CD8-positive, alpha-beta T cell (primary cell): ENCODE measurements at regions of chr11 and their contacts with region 1.

Region 1: DNA sequence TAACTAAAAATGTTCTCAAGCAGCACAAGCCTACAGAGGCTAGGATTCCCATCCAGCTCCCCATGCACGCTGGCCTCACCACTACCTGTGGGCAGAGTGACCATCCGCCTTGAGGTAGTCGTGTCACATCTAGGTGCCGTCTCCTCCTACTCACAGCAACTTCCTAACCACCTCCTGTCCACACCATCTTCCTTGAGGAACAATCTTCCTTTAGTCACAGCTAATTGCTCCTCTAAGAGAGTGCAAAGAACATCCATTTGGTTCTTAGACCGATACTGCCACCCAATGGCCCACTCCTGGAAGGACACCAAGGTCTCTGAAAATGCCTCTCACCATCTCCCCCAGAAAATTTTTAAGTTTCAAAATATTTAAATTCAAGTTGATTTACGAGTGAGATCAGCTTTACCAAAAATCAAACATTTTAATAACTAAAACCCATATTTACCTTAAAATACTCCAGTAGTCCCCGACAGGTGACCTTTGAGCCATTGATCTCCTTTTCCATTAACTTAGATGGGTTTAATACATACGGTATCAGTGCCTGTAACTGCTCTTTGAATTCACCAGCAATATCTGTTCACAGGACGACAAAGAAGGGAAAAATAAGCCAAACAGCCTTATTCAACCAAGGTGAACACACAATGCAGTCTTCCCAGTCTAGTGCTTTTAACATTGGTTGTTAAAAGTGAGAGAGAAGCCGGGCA is 21.7 kb upstream of the PLAAT3 start:
- DNase-seq: peak; percentile 60 to 82 (median 75)
- ATAC-seq: peak; percentile 89
- H3K4me3 ChIP-seq: no peak overlapping the region
- H3K4me3 Mint-ChIP-seq: no peak overlapping the region
- H3K27ac ChIP-seq: no peak overlapping the region
- H3K27ac Mint-ChIP-seq: no peak overlapping the region
- H3K4me1 ChIP-seq: no peaks in the 10 kb centered on the region
- H3K4me1 Mint-ChIP-seq: peaks cover 8% of the 10 kb centered on the region
- H3K27me3 ChIP-seq: no peaks in the 10 kb centered on the region
- H3K27me3 Mint-ChIP-seq: no peaks in the 10 kb centered on the region
- CTCF ChIP-seq: peak; percentile 93

Region 2: DNA sequence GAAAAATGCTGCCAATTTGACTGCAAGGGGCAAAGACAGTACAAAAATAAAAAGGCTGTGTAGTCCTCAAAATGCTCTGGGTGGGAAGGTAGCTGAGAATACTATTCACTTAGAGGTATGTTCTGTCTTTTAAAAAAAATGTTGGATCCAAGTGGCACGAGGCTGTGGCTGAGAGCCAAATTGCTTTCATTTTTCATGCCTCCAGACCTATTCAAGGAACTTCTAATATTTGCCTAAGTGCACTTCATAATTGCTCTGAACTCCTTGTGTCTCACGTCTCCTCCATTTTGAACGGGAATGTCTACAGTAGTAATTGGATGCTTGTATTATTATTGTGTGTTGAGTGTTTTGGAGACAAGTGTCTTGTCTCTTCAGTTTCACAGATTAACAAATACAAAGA is 373.4 kb before region 1 on chr11:
- CTCF ChIA-PET with region 1: no interaction called
- POLR2A ChIA-PET with region 1: no interaction called
- intact Hi-C with region 1: no loop called
- DNase-seq: no peak
- ATAC-seq: no peak
- H3K4me3 ChIP-seq: no peak overlapping the region
- H3K4me3 Mint-ChIP-seq: no peak overlapping the region
- H3K27ac ChIP-seq: no peak overlapping the region
- H3K27ac Mint-ChIP-seq: no peak overlapping the region
- H3K4me1 ChIP-seq: no peaks in the 10 kb centered on the region
- H3K4me1 Mint-ChIP-seq: no peaks in the 10 kb centered on the region
- H3K27me3 ChIP-seq: no peaks in the 10 kb centered on the region
- H3K27me3 Mint-ChIP-seq: peaks cover 29% of the 10 kb centered on the region
- CTCF ChIP-seq: no peak

Region 3: GRCh38 chr11:63490551-63491239 is 145.2 kb before region 1 on chr11 and contains the start of gene PLAAT5:
- CTCF ChIA-PET with region 1: interaction called, 22 read pairs
- POLR2A ChIA-PET with region 1: no interaction called
- intact Hi-C with region 1: no loop called
- DNase-seq: peak in 6 of 9 experiments; percentile 13 to 63 (median 32)
- ATAC-seq: peak; percentile 55
- H3K4me3 ChIP-seq: peak within 1 kb of the TSS; percentile 37 to 44
- H3K4me3 Mint-ChIP-seq: peak within 1 kb of the TSS; percentile 82
- H3K27ac ChIP-seq: no peak within 1 kb of the TSS
- H3K27ac Mint-ChIP-seq: peak within 1 kb of the TSS; percentile 67
- H3K4me1 ChIP-seq: peaks cover 6% of the 10 kb centered on the region
- H3K4me1 Mint-ChIP-seq: peaks cover 17% of the 10 kb centered on the region
- H3K27me3 ChIP-seq: peaks cover 0 to 4% of the 10 kb centered on the region in 2 experiments
- H3K27me3 Mint-ChIP-seq: peaks cover 17% of the 10 kb centered on the region
- CTCF ChIP-seq: no peak
- total RNA-seq, gene PLAAT5: not detected

Region 4: GRCh38 chr11:63553741-63554151 is 82.2 kb before region 1 on chr11:
- CTCF ChIA-PET with region 1: interaction called, 8 read pairs
- POLR2A ChIA-PET with region 1: interaction called, 4 read pairs
- intact Hi-C with region 1: loop called in 1 of 2 experiments (anchors 5 kb)
- DNase-seq: peak in 8 of 9 experiments; percentile 48 to 89 (median 76)
- ATAC-seq: peak; percentile 80
- H3K4me3 ChIP-seq: peak overlapping the region; percentile 15 to 17
- H3K4me3 Mint-ChIP-seq: peak overlapping the region; percentile 81
- H3K27ac ChIP-seq: peak overlapping the region; percentile 55 to 88
- H3K27ac Mint-ChIP-seq: peak overlapping the region; percentile 99
- H3K4me1 ChIP-seq: peaks cover 49% of the 10 kb centered on the region
- H3K4me1 Mint-ChIP-seq: peaks cover 74% of the 10 kb centered on the region
- H3K27me3 ChIP-seq: no peaks in the 10 kb centered on the region
- H3K27me3 Mint-ChIP-seq: no peaks in the 10 kb centered on the region
- CTCF ChIP-seq: no peak

Region 5: GRCh38 chr11:63652671-63653070 is 16.8 kb after region 1 on chr11:
- CTCF ChIA-PET with region 1: interaction called, 10 read pairs
- POLR2A ChIA-PET with region 1: no interaction called
- intact Hi-C with region 1: no loop called
- DNase-seq: no peak
- ATAC-seq: no peak
- H3K4me3 ChIP-seq: no peak overlapping the region
- H3K4me3 Mint-ChIP-seq: no peak overlapping the region
- H3K27ac ChIP-seq: no peak overlapping the region
- H3K27ac Mint-ChIP-seq: peak overlapping the region; percentile 10
- H3K4me1 ChIP-seq: peaks cover 9% of the 10 kb centered on the region
- H3K4me1 Mint-ChIP-seq: peaks cover 9% of the 10 kb centered on the region
- H3K27me3 ChIP-seq: no peaks in the 10 kb centered on the region
- H3K27me3 Mint-ChIP-seq: no peaks in the 10 kb centered on the region
- CTCF ChIP-seq: no peak